Activated CD4-positive, alpha-beta T cell treated with anti-CD3 and anti-CD28 coated beads for 36 hours (primary cell): ENCODE measurements at regions of chr2 and their contacts with region 1.

Region 1: DNA sequence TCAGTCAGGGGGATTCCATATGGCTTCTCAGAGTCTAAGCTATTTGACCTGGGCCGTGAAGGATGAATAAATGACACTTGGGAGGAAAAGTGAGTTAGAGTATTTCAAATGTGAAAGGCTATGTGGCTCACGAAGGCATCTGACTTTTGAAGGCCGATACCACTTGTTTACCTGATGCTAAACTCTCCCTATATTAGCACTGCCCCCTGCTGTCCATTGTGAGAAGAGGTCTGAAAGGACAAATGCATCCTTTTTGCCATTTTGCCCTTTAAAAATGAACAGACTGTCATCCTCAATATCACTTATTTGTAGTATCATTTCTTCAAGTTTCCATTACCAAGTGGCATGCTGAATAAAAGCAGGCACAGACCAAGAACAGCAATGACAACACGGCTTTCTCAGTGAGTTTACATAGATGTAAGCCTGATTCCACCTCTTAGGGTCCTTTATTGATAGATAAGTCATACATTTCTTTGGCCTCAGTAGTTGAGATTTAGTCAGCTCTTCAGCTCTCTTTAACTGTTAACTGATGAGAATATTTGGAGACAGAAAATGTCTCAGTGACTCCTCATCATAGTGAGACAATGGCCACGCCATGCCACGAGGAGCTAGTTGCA is 40.1 kb downstream of the DOCK10 start:
- DNase-seq: peak; percentile 76
- ATAC-seq: peak; percentile 72
- H3K4me3 Mint-ChIP-seq: peak overlapping the region; percentile 5
- H3K27ac Mint-ChIP-seq: peak overlapping the region; percentile 83
- H3K4me1 Mint-ChIP-seq: peaks cover 84% of the 10 kb centered on the region
- H3K27me3 Mint-ChIP-seq: no peaks in the 10 kb centered on the region

Region 2: DNA sequence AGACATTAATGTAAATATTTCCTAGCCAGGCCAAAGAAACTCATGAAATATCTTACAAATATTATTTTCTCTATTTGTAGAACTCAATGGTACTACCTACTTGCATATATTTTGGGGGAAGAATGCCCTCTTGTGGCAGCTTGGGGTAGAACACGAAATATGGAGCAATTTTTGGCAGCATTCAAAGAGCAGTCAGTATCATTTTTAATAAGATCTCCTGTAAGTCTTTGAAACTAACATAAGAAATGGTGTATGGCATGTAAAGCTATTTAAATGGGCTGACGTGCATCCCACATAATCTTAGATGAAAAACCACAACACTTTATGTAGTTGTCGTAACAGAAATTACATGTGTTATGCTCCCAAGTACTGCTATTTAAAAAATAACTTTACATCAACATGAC is 223.7 kb before region 1 on chr2:
- CTCF ChIA-PET with region 1: interaction called, 3 read pairs
- POLR2A ChIA-PET with region 1: interaction called, 3 read pairs
- intact Hi-C with region 1: loop called in 1 of 2 experiments (anchors 10 kb)
- DNase-seq: peak; percentile 72
- ATAC-seq: peak; percentile 79
- H3K4me3 Mint-ChIP-seq: no peak overlapping the region
- H3K27ac Mint-ChIP-seq: peak overlapping the region; percentile 19
- H3K4me1 Mint-ChIP-seq: peaks cover 6% of the 10 kb centered on the region
- H3K27me3 Mint-ChIP-seq: no peaks in the 10 kb centered on the region

Region 3: GRCh38 chr2:224816816-224817215 is 185.3 kb before region 1 on chr2:
- CTCF ChIA-PET with region 1: no interaction called
- POLR2A ChIA-PET with region 1: no interaction called
- intact Hi-C with region 1: no loop called
- DNase-seq: no peak
- ATAC-seq: no peak
- H3K4me3 Mint-ChIP-seq: no peak overlapping the region
- H3K27ac Mint-ChIP-seq: peak overlapping the region; percentile 20
- H3K4me1 Mint-ChIP-seq: peaks cover 10% of the 10 kb centered on the region
- H3K27me3 Mint-ChIP-seq: no peaks in the 10 kb centered on the region

Region 4: DNA sequence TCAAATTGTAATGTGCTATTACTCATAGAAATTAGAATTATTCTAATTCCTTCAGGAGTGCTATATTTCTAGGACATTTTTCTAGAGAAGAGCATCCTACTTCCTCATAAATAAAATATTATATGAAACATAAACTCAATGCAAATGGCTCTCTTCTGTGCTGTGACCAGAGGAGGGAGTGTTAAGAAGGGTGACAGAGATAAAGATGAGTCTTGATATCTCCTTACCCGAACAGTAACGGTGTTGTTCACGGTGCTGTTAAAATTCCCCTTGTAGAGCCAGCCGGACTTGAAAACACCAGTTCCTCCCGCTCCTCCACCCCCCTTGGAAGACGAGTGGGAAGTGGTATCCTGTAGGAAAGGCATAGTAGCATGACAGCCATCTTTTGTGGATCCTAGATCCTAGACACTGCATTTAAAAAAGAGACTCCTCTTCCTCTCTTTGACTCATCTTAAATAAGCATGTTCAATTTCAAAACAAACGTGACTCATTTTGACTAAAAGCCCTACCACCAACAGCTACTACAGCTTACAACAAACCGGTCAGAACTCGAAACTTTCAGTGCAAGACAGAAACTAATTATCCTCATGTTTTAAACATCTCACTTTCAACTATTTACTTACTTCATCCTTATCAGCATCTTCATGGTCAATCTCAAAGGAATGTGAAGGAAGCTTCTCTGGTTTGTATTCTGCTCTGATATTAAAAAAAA is 116.2 kb before region 1 on chr2:
- CTCF ChIA-PET with region 1: interaction called, 17 read pairs
- POLR2A ChIA-PET with region 1: no interaction called
- intact Hi-C with region 1: loop called (anchors 1 to 2 kb)
- DNase-seq: no peak
- ATAC-seq: peak; percentile 81
- H3K4me3 Mint-ChIP-seq: peak overlapping the region; percentile 24
- H3K27ac Mint-ChIP-seq: peak overlapping the region; percentile 76
- H3K4me1 Mint-ChIP-seq: peaks cover 65% of the 10 kb centered on the region
- H3K27me3 Mint-ChIP-seq: no peaks in the 10 kb centered on the region

Region 5: DNA sequence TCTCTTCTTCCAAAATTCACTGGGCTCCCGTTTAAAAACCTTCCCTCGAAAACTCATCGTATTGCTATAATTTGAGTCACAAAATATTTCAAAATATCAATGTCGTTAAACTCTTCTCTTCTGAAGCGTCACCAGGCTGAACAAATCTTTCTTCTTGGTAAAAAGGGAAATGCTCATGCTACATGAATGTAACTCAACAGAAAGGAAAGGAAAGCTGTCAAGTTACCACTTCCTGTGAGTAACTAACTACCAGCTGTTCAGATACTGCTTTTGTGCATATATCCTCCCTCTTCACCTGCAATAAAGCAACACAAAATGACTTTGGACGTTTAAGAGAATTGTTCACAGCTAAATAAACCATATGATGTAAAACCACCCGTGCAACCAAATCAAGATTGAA is 55.3 kb before region 1 on chr2:
- CTCF ChIA-PET with region 1: interaction called, 5 read pairs
- POLR2A ChIA-PET with region 1: no interaction called
- intact Hi-C with region 1: loop called in 1 of 2 experiments (anchors 2 kb)
- DNase-seq: no peak
- ATAC-seq: peak; percentile 63
- H3K4me3 Mint-ChIP-seq: peak overlapping the region; percentile 79
- H3K27ac Mint-ChIP-seq: peak overlapping the region; percentile 91
- H3K4me1 Mint-ChIP-seq: peaks cover 61% of the 10 kb centered on the region
- H3K27me3 Mint-ChIP-seq: no peaks in the 10 kb centered on the region

Region 6: DNA sequence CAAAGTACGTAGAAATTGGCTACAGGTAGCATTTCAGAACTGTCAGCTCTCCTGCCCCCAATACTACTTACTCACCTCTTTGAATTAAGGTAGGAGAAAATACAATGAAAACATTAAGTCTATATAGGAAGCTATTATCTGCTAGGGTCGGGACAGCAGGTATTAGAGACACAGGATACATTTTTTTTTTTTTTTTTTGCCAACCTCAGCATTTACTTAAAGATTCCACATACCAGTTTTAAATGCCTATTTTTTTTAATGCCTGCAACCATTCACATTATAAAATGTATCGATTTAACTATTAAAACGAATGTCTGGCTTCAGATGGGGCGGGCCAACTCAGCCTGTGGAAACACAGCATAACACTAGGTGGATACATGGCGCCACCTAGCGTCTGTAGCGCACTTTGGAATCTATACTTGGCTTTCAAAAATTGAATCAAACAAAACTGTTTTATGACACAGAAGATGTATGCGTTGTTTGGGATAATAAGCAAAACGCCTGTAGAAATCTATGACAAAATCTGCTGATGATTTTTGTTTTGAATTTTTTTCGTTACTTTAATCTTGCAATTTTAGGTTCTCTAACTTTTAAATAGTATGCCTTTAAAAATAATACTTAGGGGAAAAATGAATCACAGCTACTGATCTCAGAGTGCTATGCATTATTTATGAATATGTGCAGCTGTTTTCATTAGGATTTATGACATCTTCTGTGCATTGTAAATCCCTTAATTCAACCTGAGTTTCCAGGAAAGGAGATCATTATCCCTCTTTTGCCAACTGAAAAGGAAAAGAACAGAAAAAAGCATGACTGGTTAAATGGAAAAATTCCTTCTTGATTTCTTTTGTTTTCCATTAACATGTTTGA is 658.4 kb after region 1 on chr2:
- CTCF ChIA-PET with region 1: no interaction called
- POLR2A ChIA-PET with region 1: no interaction called
- intact Hi-C with region 1: loop called (anchors 2 kb)
- DNase-seq: peak; percentile 89
- ATAC-seq: peak; percentile 71
- H3K4me3 Mint-ChIP-seq: no peak overlapping the region
- H3K27ac Mint-ChIP-seq: no peak overlapping the region
- H3K4me1 Mint-ChIP-seq: no peaks in the 10 kb centered on the region
- H3K27me3 Mint-ChIP-seq: peaks cover 18% of the 10 kb centered on the region